Motor neuron (in vitro differentiated cells): ENCODE measurements at regions of chr2 and their contacts with region 1.

Region 1: DNA sequence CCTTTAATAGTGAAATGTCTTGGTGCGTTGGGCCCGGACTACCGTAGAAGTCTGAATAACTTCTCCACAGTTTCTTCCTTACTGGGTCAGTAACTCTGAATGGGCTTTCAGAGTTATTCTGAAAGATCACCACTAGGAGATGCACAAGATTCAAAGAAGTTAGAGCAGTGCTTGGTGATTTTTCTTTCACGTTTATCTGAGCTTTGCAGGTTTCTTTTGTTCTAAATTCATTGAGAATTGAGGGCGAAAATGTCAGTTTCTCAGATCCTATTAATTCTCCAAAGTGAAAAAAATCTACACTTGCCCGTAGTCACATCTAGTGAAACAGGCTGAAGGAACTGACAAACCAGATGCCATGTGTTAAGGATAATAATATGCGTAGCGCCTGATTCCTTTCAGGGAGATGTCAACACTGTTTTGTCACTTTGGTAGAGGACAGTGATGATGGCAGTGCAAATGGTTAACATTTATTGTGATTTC is 70.1 kb downstream of the QPCT start:
- ATAC-seq: peak; percentile 58 to 92 (median 77)
- H3K4me3 ChIP-seq: no peak overlapping the region
- H3K27ac ChIP-seq: no peak overlapping the region
- H3K4me1 ChIP-seq: peaks cover 3% of the 10 kb centered on the region in 2 donors

Region 2: DNA sequence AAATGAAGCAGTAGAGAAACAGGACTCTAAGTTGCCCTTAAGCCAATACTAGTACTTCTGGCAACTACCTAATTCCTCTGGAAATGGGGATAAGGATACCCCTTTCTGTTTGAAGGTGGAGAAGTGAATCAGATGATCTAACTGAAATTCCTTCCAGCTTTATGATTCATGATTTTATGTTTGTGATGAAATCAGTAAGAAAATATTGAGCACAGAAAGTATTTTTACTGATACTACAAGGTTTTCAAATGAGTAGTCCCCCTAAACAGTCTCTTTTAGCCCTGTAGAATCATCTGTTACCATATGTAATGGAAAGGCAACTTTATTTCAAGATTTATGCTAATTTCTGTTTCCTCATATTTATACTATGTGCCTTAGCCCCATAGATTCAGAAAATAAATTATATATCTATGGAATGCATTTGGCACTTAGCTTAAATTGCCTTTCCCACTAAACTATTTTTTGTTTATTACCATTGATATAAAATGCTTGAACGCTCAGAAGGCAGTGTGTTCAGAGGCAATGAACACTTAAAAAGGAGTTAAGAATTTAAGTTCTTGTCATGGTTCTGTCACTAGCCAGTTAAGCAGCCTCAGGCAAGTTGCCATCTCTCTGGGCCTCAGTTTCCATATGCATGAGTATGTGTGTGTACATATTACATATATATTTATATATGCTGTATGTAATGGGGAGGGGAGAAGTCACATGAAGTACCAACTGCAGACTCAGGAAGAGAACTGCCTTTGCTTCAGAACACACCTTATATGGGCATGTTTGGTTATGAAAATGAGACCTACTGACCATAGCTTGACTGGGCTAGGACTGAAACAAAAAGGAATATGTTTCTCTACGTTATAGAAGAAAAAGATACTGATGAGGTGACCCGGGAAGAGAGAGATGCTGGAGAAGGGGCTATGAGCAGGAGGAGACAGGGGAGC is 159.2 kb after region 1 on chr2:
- in situ Hi-C with region 1: no loop called
- ATAC-seq: peak in 3 of 8 experiments; percentile 73 to 100 (median 80)
- H3K4me3 ChIP-seq: no peak overlapping the region
- H3K27ac ChIP-seq: no peak overlapping the region
- H3K4me1 ChIP-seq: peaks cover 5 to 8% of the 10 kb centered on the region in 2 donors

Region 3: GRCh38 chr2:37672104-37672869 is 257.8 kb after region 1 on chr2:
- in situ Hi-C with region 1: loop called in 1 of 9 experiments (anchors 25 kb)
- ATAC-seq: peak; percentile 50 to 75 (median 70)
- H3K4me3 ChIP-seq: peak overlapping the region; percentile 72 to 95 (median 92)
- H3K27ac ChIP-seq: peak overlapping the region; percentile 87 to 93
- H3K4me1 ChIP-seq: peaks cover 6 to 10% of the 10 kb centered on the region in 2 donors

Region 4: GRCh38 chr2:37832590-37833197 is 418.2 kb after region 1 on chr2:
- in situ Hi-C with region 1: loop called in 1 of 9 experiments (anchors 25 kb)
- ATAC-seq: peak; percentile 83 to 96 (median 88)
- H3K4me3 ChIP-seq: no peak overlapping the region
- H3K27ac ChIP-seq: no peak overlapping the region
- H3K4me1 ChIP-seq: peaks cover 3 to 7% of the 10 kb centered on the region in 2 donors

Region 5: DNA sequence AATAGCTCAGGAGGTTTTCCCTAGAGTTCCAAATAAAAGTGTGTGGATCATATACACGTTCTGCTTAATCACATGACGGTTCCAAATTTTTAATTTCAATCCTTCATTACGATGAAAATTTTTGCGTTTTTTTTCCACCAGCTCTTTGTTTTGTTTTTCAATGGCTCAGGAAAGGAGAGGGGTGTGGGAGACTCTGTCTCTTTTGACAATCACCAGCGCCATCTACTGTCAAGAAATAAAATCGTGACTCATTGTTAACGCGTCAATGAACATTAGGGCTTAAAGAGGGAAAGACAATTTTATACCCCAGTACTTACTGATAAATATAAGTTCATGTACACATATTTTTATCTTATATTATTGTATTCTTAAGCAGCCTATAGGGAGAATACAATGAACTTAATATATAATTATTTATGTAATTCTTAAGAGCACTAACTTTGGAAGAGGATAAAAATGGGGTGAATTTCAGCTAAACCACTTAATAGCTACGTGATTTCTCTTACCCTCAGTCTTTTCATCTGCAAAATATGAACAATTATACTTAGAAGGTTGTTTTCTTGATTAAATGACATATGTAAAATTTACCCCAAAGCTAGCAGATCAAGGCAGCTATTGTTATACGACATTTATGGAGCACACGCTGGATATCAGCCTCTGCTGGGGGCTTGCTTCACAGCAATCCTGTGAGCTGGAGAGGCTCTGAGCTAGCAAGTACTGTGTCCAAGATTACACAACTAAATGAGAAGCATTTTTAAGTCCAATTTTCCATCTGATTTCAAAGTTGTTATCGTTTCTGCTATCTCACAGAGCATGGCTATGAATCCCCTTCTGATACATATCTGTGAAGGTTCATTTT is 463.2 kb after region 1 on chr2:
- in situ Hi-C with region 1: loop called in 3 of 9 experiments (anchors 10 to 25 kb)
- ATAC-seq: peak; percentile 68 to 90 (median 80)
- H3K4me3 ChIP-seq: no peak overlapping the region
- H3K27ac ChIP-seq: no peak overlapping the region
- H3K4me1 ChIP-seq: peaks cover 7 to 9% of the 10 kb centered on the region in 2 donors